ENCODE measurements at regions of chr1 and their contacts with region 1.

Region 1: DNA sequence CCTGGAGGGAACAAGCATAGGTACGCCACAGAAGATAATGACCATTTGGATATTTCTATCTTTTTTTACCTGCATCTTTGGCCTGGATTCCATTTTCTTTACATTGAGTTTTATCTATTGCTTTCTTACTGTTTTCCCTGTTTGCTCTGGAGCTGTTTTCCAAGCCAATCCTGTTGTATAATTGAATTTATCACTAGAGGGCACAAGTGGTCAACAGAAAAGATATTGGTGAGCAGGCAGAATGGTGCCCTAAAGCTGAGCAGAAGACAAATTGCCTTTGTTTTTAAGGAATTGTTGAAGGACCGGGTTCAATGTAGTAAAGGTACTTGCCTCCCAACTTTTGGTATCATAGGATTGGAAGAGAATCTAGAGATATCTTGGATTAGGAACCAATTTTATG is 152.8 kb downstream of the PPP1R12B start:
- DNase-seq: no peak
- H3K4me3 ChIP-seq: no peak overlapping the region
- H3K27ac ChIP-seq: no peak overlapping the region
- H3K4me1 ChIP-seq: peaks cover 12 to 13% of the 10 kb centered on the region in 2 donors
- H3K27me3 ChIP-seq: no peaks in the 10 kb centered on the region
- CTCF ChIP-seq: peak; percentile 15 to 82 (median 58)
- POLR2A ChIP-seq: no peak

Region 2: DNA sequence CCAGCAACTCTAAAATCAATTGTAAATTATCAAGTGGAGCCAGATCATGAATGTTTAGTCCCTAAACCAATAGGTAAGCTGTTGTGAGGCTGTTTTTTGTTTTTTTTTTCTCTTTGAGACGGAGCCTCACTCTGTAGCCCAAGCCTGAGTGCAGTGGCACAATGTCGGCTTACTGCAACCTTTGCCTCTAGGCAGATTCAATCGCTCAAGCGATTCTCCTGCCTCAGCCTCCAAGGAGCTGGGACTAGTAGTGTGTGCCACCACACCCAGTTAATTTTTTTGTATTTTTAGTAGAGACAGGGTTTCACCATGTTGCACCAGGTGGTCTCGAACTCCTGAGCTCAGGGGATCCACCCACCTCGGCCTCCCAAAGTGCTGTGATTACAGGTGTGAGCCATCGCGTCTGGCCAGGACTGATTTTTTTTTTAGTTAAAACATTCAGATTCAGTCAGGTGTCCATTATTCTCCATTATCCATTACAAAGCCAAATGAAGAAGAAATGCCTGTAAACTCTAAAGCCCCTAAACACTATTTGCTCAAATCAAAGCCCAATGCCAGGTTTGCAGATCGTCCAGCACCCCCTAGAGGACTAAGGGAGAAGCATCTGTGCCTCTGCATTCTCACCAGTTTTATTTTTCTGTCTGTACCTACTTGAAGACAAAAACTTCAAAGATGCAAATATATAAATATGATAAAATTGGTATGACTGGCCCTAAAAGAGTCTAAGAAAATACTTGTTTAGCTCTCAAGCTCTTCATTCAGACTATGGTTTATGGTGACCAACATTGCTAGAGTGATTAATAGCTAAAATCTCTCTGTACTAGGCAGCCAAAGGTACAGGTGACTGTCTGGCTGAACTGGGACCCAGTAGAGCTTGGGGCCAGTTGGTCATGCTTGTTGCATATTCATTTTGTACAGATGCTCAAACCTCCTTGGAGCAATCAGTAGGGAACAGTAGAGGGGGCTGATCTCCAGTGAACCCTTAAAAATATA is 70.4 kb after region 1 on chr1:
- intact Hi-C with region 1: loop called (anchors 10 kb)
- DNase-seq: peak; percentile 25 to 35
- H3K4me3 ChIP-seq: no peak overlapping the region
- H3K27ac ChIP-seq: no peak overlapping the region
- H3K4me1 ChIP-seq: peaks cover 5 to 38% of the 10 kb centered on the region in 2 donors
- H3K27me3 ChIP-seq: no peaks in the 10 kb centered on the region
- CTCF ChIP-seq: peak; percentile 66 to 77 (median 74)
- POLR2A ChIP-seq: no peak

Region 3: GRCh38 chr1:202599677-202600431 is 98.6 kb after region 1 on chr1:
- intact Hi-C with region 1: loop called (anchors 10 kb)
- DNase-seq: peak; percentile 75 to 78
- H3K4me3 ChIP-seq: no peak overlapping the region
- H3K27ac ChIP-seq: peak overlapping the region in 2 of 3 donors; percentile 15 to 29
- H3K4me1 ChIP-seq: peaks cover 0 to 5% of the 10 kb centered on the region in 2 donors
- H3K27me3 ChIP-seq: no peaks in the 10 kb centered on the region
- CTCF ChIP-seq: peak; percentile 21 to 92 (median 82)
- POLR2A ChIP-seq: no peak

Region 4: DNA sequence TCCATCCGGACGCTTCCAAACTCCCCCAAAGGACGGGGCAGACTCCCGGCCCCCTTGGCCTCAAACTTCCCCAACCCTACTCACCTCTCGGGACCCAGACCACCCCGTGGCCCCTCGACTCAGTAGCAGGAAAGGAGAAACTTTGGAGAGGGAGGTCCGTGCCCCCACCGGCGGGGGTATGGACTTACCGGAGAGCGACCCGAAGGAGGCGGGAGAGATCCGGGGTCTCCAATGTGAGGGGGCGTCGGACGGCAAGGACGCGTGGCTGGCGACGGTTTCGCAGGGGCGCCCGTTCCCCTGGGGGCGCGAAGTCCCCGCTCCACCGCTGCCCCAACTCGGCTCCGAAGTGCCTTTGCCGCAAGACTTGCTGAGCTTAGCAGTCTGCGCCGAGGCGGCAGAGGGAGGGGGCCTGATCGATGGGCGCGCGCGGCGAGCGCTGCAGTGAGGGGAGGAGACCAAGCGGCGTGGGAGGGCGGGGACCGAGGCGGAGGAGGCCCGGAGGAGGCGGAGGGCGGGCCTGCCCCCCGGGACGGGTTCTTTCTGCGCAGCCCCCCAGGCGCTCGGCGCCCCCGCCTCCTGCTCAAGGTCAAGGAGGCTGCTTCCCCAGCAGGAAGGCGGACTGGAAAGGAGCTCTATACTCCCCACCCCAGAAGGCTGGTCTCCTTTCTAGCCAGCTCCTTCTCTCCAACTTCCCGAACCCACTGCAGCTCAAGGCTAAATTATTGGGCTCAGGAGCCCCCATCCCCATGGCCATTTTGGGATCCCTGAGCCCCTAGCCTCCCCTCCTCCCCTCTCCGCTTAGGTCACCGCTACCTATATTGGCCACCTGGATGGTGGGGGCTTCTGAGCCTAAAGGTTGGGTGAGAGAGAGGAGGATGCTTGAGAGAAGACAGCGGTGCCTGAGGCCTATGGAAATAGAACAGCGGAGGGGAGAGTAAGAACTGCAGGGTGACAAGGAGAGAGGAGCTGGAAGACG is 209.1 kb after region 1 on chr1 and contains the start of gene SYT2:
- intact Hi-C with region 1: loop called (anchors 10 kb)
- DNase-seq: peak; percentile 54 to 57
- H3K4me3 ChIP-seq: peak within 1 kb of the TSS in 1 of 3 donors; percentile 12
- H3K27ac ChIP-seq: no peak within 1 kb of the TSS
- H3K4me1 ChIP-seq: peaks cover 12 to 17% of the 10 kb centered on the region in 2 donors
- H3K27me3 ChIP-seq: peaks cover 11% of the 10 kb centered on the region
- CTCF ChIP-seq: no peak
- POLR2A ChIP-seq: no peak
- total RNA-seq, gene SYT2: under 0.01 to 0.38 TPM in 2 of 4 donors, not detected in the others